ENCODE measurements at regions of chr3 and their contacts with region 1.

Region 1: GRCh38 chr3:9302425-9303181 is 53.2 kb upstream of the SRGAP3 start:
- DNase-seq: peak; percentile 83
- CTCF ChIP-seq: peak; percentile 85

Region 2: DNA sequence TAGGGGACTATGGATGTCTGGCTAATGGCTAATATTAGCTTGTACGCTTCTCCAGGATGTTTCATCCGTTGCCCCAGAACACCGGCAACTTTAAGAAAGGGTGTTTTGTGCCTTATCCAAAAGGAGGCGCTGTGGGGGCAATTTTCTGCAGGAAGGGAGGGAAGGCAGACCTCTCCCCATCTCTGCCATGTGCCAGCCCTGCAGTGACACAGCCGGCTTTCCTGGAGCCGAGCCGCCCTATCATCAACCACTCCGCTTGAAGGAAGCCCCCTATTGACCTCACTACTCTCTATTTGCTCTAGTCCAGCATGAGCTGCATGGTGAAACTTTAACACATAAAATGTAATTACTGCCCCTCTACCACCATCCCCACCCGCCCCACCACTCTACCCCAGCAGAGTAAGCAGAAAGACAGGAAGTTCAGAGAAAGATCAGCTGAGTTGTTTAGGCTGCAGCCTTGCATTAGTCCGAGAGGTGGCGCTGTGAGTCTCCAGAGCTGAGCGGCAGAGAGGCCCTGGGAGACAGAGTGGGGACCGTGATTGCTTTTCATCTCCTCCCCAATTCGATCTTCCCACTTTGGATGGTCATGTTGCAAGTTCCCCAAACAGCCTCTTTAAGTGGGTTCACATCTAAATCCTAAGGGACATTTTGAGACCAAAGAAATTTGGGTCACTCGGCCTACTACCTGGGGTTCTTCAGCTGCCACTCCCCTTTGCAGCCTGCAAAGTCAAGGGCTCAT is 314.8 kb before region 1 on chr3:
- CTCF ChIA-PET with region 1: interaction called, 84 read pairs
- POLR2A ChIA-PET with region 1: no interaction called
- DNase-seq: peak; percentile 84
- CTCF ChIP-seq: peak; percentile 75

Region 3: GRCh38 chr3:9224490-9224889 is 78.1 kb before region 1 on chr3:
- CTCF ChIA-PET with region 1: interaction called, 11 read pairs
- POLR2A ChIA-PET with region 1: no interaction called
- DNase-seq: peak; percentile 77
- CTCF ChIP-seq: peak; percentile 39

Region 4: GRCh38 chr3:9290566-9290965 is 12.0 kb before region 1 on chr3:
- CTCF ChIA-PET with region 1: interaction called, 13 read pairs
- POLR2A ChIA-PET with region 1: no interaction called
- DNase-seq: no peak
- CTCF ChIP-seq: no peak

Region 5: GRCh38 chr3:9322780-9323179 is 20.2 kb after region 1 on chr3:
- CTCF ChIA-PET with region 1: interaction called, 11 read pairs
- POLR2A ChIA-PET with region 1: no interaction called
- DNase-seq: no peak
- CTCF ChIP-seq: no peak

Measured in GM10248 (cell line).